Cardiac septum (tissue), 1 donor: ENCODE measurements at regions of chr5 and their contacts with region 1.

Region 1: GRCh38 chr5:107673368-107674136 is 2.8 kb upstream of the EFNA5 start:
- DNase-seq: peak; percentile 91

Region 2: DNA sequence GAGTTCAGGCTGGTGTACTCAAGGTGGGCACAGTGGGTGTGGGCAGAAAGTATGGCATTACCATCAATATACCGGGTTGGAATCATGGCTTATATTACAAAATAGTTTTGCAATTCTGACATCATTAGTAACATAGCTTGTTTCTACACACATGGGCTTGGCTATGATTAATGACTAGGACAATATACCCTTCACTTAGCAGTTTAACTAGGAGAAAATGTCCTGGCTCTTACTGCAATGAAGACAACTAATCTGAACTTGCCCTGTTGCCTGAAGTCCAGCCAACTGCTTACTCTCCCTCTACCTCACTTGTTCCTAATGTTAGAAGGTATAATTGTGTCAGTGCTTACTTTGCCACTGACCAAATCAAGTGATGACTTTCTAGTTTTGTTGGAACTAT is 615.3 kb before region 1 on chr5:
- intact Hi-C with region 1: loop called (anchors 10 kb)
- DNase-seq: no peak

Region 3: GRCh38 chr5:107217721-107218130 is 455.8 kb before region 1 on chr5:
- intact Hi-C with region 1: loop called (anchors 2 kb)
- DNase-seq: peak; percentile 87

Region 4: DNA sequence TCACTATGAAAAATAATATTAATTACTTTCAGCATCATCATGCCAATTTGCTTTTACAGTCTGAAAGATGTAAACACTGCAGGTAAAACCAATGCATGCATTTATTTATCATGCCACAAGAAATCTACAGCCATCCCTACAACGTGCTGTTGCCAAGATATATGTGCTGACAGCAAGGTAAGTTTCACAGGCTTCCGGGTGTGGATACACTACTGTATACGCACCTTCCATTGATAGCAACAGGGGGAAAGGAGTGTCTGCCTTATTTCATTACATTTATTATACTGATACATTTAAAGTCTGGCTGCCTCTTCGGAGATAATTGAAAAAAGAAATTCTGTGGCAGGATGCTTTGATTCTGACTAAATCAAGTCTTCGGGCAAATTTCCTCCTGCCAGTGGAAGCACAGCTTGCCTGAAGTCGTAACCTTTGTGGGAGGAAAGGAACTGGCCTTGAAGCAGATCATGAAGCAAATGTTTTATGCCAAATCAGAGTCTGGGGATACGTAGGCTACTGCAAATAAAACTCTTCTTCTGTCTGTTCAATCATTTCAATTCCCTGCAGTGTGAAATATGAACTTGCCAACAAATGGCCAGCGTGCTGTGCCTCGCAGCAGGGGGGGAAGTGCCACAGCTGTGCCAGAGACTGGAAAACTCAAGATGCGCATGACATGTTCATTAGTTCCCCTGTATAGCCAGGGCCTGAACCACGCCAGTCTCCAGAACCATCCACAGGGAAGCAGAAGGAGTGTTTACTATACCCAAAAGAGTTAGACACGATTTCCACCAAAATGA is 270.9 kb before region 1 on chr5:
- intact Hi-C with region 1: loop called (anchors 5 kb)
- DNase-seq: no peak

Region 5: GRCh38 chr5:107542428-107542827 is 131.1 kb before region 1 on chr5:
- intact Hi-C with region 1: loop called (anchors 5 kb)
- DNase-seq: no peak

Region 6: DNA sequence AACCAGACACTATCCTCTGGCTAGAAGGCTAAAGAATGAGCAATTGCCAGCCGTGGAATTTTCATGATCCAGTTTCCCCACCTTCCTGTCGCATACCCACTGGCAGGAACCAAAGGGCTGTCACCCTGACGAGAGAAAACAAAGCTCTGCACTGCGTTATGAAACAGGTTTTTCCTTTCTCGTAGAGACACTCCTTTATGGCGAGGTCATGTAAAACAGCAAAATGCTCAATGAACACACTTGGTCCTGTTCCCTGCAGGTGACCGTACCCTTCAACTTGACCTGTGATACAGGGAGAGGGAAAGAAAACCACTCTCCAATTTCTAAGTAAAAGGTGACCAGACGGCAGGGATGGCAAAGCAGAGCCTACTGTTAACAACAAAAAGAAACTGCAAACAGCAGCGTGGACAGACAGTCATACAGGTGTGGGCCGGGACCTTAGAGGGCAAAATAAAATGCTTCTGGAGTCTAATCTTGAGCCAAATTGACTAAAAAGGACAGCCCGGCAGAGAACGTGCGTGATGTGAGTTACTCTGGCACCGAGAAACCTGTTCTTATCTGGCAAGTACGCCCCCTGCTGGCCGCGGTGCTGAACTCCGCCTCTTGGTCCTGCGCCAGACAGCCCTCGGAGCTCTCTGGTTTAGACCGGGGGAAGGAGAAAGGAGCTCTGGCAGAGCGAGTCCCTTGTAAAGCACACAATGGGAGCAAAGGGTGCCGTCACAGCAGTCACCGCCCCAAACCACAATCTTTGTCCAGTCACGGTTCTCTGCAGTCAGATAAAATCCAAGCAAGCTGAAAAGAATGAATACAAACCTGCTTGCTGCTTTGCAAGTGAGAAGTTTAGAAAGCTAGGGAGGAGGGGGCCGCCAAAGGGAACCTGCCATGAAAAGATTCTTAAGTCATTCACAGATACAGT is 101.7 kb before region 1 on chr5:
- intact Hi-C with region 1: loop called (anchors 2 kb)
- DNase-seq: peak; percentile 96

Region 7: DNA sequence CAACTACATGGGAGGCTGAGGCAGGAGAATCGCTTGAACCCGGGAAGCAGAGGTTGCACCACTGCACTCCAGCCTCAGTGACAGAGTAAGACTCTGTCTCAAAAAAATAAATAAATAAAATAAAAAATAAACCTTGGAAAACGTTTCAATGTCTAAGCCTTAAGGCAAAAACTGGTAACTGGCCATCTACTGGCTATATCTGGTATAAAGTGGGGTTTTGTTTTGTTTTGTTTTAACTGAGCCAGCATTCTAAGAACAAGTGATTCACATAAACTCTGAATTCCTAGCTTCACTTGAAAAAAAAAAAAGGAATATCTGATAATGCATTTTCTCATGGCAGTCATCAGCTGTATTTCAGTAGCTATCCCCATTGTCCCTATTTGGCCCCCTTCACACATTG is 123.2 kb after region 1 on chr5:
- intact Hi-C with region 1: no loop called
- DNase-seq: no peak